IMR-90 (cell line): ENCODE measurements at regions of chr1 and their contacts with region 1.

Region 1: GRCh38 chr1:111720274-111720976 is 18.8 kb downstream of the INKA2 start:
- DNase-seq: no peak
- ATAC-seq: no peak
- H3K4me3 ChIP-seq: no peak overlapping the region
- H3K27ac ChIP-seq: no peak overlapping the region
- H3K4me1 ChIP-seq: peaks cover 12% of the 10 kb centered on the region
- H3K27me3 ChIP-seq: no peaks in the 10 kb centered on the region
- CTCF ChIP-seq: no peak
- POLR2A ChIP-seq: no peak
- RAD21 ChIP-seq: no peak

Region 2: DNA sequence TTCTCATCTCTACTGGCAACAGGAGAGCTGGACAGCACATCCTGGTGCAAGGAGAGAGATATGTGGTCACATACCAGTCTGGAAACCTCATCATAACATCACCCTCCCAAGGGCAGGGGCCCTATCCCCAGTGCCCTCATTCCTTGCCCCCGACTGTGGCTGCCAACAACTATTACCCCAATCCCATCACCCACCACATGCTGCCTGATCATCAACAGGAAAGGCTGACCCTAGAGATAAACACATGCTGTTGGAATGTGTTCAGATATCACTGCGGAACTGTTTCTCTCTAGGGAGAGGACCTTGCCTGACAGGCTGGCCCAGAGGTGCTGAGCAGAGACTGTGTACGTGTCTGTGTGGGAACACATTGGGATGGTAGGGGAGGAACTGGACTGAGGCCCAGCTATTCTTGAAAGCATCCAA is 23.3 kb after region 1 on chr1:
- CTCF ChIA-PET with region 1: interaction called, 13 read pairs
- POLR2A ChIA-PET with region 1: no interaction called
- dilution Hi-C with region 1: no loop called
- in situ Hi-C with region 1: no loop called
- intact Hi-C with region 1: no loop called
- DNase-seq: peak; percentile 84
- ATAC-seq: peak; percentile 57
- H3K4me3 ChIP-seq: no peak overlapping the region
- H3K27ac ChIP-seq: peak overlapping the region; percentile 70
- H3K4me1 ChIP-seq: peaks cover 13% of the 10 kb centered on the region
- H3K27me3 ChIP-seq: no peaks in the 10 kb centered on the region
- CTCF ChIP-seq: no peak
- POLR2A ChIP-seq: peak; percentile 5; the same call in 1 of the 2 replicates
- RAD21 ChIP-seq: no peak

Region 3: GRCh38 chr1:111778541-111779051 is 58.2 kb after region 1 on chr1:
- CTCF ChIA-PET with region 1: no interaction called
- POLR2A ChIA-PET with region 1: no interaction called
- dilution Hi-C with region 1: no loop called
- in situ Hi-C with region 1: no loop called
- intact Hi-C with region 1: no loop called
- DNase-seq: no peak
- ATAC-seq: peak; percentile 49
- H3K4me3 ChIP-seq: no peak overlapping the region
- H3K27ac ChIP-seq: peak overlapping the region; percentile 73; the same call in 1 of the 2 replicates
- H3K4me1 ChIP-seq: peaks cover 23% of the 10 kb centered on the region
- H3K27me3 ChIP-seq: peaks cover 8% of the 10 kb centered on the region
- CTCF ChIP-seq: no peak
- POLR2A ChIP-seq: no peak
- RAD21 ChIP-seq: no peak

Region 4: DNA sequence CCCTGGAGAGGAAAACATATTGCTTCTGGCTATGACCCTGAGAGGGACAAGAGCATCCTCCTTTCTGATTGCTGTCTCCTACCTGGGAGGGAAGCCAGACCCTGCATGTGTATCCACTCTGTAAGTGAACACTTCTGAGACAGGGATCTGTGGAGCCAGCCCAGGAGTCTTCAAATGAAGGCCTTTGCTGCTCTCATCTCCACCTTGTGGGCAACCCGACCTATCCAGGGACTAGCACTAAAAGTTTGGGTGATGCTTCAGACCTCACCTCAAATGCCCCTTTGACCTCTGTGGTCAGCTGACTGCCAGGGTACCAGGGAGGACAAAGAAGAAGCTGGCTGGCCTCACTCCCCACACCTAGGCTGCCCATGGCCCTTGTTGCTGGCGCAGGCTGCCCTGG is 204.4 kb after region 1 on chr1:
- CTCF ChIA-PET with region 1: no interaction called
- POLR2A ChIA-PET with region 1: no interaction called
- dilution Hi-C with region 1: no loop called
- in situ Hi-C with region 1: no loop called
- intact Hi-C with region 1: no loop called
- DNase-seq: no peak
- ATAC-seq: no peak
- H3K4me3 ChIP-seq: no peak overlapping the region
- H3K27ac ChIP-seq: no peak overlapping the region
- H3K4me1 ChIP-seq: no peaks in the 10 kb centered on the region
- H3K27me3 ChIP-seq: peaks cover 6% of the 10 kb centered on the region
- CTCF ChIP-seq: no peak
- POLR2A ChIP-seq: no peak
- RAD21 ChIP-seq: no peak